Activated CD4-positive, alpha-beta T cell treated with anti-CD3 and anti-CD28 coated beads, Interleukin-2, amount 10 ng/mL, durations not matched to agents 24 days and 14 days (primary cell): ENCODE measurements at regions of chr3 and their contacts with region 1.

Region 1: DNA sequence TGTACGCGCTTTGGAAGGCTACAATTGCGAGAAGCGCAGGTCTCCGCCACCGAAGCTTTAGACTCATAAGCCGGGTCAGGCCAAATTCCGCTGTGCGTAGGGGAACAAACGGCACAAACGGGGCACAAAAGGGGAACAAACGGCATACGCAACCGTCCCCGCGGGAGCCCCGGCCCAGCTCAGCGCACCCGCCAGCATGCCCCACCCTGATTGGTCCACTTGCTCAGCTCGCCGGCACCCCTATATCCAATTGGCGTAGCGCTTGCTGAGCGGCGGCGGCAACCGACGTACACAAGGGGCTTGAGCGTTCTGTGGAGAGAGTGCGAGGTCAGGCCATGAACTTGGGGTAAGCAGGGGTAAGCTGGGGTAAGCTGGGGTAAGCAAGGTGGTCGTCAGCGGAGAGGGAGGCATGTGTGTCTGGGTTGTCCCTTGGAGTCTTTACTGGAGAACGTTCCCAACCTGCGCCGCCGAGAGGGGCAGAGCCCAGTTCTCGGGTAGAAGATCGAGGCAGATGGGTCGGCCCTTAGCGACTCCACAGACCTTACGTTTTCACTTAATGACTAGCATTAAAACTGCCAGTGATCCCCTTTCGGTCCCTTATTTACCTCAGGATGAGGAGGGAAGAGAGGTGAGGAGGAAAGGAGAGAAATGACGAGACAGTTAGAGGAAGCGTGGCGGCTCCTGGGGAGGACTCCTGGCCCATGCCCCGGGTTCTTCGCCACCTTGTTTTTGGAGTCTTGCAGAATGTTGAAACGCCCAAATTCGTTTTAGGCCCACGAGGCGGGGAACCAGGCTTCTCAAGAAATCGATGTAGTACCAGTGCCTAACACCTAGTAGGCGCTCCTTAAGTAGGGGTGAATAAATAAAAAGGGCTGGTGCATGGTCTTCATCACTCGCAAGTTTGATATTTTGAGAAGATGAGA is at the start of gene CCDC66:
- DNase-seq: peak; percentile 97
- H3K4me3 Mint-ChIP-seq: peak within 1 kb of the TSS; percentile 92
- H3K27ac Mint-ChIP-seq: peak within 1 kb of the TSS; percentile 94
- H3K4me1 Mint-ChIP-seq: peaks cover 19% of the 10 kb centered on the region
- H3K27me3 Mint-ChIP-seq: peaks cover 19% of the 10 kb centered on the region
- total RNA-seq, gene CCDC66: 36.8 and 37.8 TPM in 2 replicates

Region 2: DNA sequence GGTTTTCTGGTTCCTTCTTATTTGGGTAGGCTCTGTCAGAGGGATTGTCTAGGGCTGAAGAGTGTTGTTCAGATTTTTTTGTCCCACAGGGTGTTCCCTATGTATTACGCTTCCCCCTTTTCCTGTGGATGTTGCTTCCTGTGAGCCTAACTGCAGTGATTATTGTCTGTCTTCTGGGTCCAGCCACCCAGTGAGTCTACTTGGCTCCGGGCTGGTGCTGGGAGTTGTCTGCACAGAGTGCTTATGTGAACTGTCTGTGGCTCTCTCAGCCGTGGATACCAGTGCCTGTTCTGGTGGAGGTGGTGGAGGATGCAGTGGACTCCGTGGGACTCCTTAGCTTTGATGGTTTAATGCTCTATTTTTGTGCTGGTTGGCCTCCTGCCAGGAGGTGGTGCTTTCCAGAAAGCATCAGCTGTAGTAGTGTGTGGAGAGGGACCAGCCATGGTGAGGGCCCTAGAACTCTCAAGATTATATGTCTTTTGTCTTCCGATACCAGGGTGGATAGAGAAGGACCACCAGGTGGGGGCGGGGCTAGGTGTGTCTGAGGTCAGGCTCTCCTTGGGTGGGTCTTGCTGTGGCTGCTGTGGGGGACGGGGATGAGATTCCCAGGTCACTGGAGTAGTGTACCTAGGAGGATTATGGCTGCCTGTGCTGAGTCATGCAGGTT is 53.6 kb after region 1 on chr3:
- intact Hi-C with region 1: loop called (anchors 1 kb)
- DNase-seq: no peak
- H3K4me3 Mint-ChIP-seq: no peak overlapping the region
- H3K27ac Mint-ChIP-seq: peak overlapping the region; percentile 34
- H3K4me1 Mint-ChIP-seq: peaks cover 57% of the 10 kb centered on the region
- H3K27me3 Mint-ChIP-seq: no peaks in the 10 kb centered on the region

Region 3: DNA sequence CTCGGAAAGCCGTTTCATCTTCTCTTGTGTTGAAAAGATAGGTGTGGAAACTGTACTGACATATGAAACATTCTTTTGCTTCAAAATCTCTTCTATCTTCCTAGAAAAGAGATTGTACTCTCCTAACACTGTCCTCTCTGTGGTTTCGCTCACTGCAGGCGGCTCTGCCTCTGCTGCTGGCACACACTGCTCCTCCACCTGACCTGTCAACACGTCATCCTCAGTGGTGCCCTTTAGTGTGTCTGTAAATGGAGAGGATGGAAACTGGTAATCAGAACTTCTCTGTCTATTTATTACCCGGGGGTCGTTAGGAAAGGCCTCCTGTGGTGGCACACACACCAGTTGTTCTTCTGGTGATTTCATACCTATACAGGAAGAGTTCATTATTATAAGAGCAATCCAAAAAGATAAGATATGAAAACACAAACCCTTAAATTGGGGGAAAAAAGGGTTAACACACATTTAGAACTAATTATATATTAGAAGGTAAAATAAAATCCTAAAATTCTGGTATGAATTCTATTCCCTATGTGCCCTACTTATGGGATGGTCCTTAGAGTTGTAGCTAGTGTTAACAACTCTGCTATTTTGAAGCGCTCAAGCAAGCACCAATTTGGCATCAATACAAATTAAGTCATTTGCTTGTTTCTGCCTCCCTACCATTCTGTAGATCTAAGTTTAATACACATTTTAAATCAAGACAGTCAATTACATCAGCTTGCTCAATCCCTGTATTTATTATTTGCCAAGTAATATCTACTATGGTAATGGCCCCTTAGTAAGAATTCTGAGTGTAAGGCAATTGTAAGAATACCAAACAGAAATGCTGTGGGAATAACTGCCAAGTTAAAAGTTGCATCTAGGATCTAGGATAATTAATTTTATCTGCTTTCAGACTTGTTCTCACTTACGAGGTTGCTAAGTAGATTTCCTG is 76.7 kb after region 1 on chr3:
- intact Hi-C with region 1: loop called (anchors 5 kb)
- DNase-seq: no peak
- H3K4me3 Mint-ChIP-seq: no peak overlapping the region
- H3K27ac Mint-ChIP-seq: no peak overlapping the region
- H3K4me1 Mint-ChIP-seq: peaks cover 5% of the 10 kb centered on the region
- H3K27me3 Mint-ChIP-seq: no peaks in the 10 kb centered on the region

Region 4: DNA sequence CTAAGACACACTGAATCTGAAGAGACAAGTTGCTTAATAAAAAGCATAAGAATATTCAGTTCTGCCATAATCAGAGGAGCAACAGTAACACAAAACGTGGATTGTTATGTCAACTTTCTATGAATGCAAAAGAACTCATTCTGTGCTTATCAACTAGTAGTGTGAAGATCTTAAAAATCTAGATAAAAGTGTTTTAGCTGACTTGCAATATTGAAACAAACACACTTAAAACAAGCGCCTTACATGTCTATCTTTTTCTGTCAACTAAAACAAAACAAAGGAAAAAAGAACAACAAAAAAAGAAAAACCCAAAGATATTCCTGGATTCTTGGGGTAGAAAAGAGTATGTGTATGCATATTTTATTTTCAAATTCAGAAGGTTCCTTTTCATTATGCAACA is 88.2 kb after region 1 on chr3:
- intact Hi-C with region 1: no loop called
- DNase-seq: no peak
- H3K4me3 Mint-ChIP-seq: no peak overlapping the region
- H3K27ac Mint-ChIP-seq: no peak overlapping the region
- H3K4me1 Mint-ChIP-seq: peaks cover 17% of the 10 kb centered on the region
- H3K27me3 Mint-ChIP-seq: no peaks in the 10 kb centered on the region

Region 5: GRCh38 chr3:56682462-56683121 is 125.4 kb after region 1 on chr3:
- intact Hi-C with region 1: loop called (anchors 5 kb)
- DNase-seq: peak; percentile 94
- H3K4me3 Mint-ChIP-seq: peak overlapping the region; percentile 100
- H3K27ac Mint-ChIP-seq: peak overlapping the region; percentile 99
- H3K4me1 Mint-ChIP-seq: peaks cover 29% of the 10 kb centered on the region
- H3K27me3 Mint-ChIP-seq: no peaks in the 10 kb centered on the region

Region 6: DNA sequence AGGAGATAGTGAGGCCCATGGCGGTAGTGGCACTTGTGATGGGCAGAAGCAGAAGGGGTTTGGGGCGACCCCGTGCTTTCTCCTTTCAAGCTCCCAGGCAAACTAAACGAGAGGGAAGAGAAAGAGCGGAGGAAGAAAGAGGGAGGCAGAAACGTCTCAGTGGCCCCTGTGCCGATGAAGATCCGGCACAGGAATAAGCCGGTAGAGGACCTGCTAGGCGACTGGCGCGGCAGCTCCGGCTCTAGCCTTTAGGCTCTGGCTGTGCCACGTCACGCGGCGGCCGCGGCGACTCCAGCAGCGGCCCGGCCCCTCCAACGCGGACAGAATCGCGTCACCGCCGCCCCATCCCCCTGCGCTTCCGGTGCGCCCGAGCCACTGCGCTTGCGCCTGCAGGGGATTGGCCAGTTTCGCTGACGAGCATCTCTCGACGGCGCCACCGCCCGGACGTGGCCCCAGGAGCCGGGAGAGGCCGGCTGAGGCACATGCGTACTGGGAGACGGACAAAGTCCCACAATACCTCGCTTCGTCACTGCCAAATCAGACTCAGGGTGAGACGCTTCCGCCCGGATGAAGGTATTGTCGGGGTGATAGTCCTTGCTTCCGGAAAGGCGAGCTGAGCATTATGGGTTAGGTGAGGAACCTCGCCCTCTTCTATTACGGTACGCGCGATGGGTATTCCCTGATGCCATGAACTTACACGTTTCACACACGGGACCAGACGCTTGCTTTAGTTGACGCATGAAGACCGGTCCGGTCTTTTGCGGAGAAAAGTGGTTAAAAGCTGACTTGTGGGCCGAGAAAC is 1040.2 kb after region 1 on chr3 and contains the start of gene ARF4:
- intact Hi-C with region 1: loop called (anchors 5 kb)
- DNase-seq: peak; percentile 100
- H3K4me3 Mint-ChIP-seq: peak within 1 kb of the TSS; percentile 87
- H3K27ac Mint-ChIP-seq: peak within 1 kb of the TSS; percentile 99
- H3K4me1 Mint-ChIP-seq: peaks cover 32% of the 10 kb centered on the region
- H3K27me3 Mint-ChIP-seq: no peaks in the 10 kb centered on the region
- total RNA-seq, gene ARF4: 84.4 and 91.4 TPM in 2 replicates